Activated CD8-positive, alpha-beta memory T cell treated with anti-CD3 and anti-CD28 coated beads, Interleukin-2, amount 10 ng/mL, durations not matched to agents 7 days and 5 days (primary cell): ENCODE measurements at regions of chr7 and their contacts with region 1.

Region 1: GRCh38 chr7:151631968-151632749 is 112.5 kb upstream of the RHEB start:
- DNase-seq: peak; percentile 89
- ATAC-seq: peak; percentile 84
- H3K4me3 Mint-ChIP-seq: peak overlapping the region; percentile 85
- H3K27ac Mint-ChIP-seq: peak overlapping the region; percentile 95
- H3K4me1 Mint-ChIP-seq: peaks cover 29% of the 10 kb centered on the region
- H3K27me3 Mint-ChIP-seq: no peaks in the 10 kb centered on the region

Region 2: GRCh38 chr7:151621961-151622360 is 10.2 kb before region 1 on chr7:
- CTCF ChIA-PET with region 1: interaction called, 16 read pairs
- DNase-seq: no peak
- ATAC-seq: no peak
- H3K4me3 Mint-ChIP-seq: no peak overlapping the region
- H3K27ac Mint-ChIP-seq: no peak overlapping the region
- H3K4me1 Mint-ChIP-seq: peaks cover 12% of the 10 kb centered on the region
- H3K27me3 Mint-ChIP-seq: no peaks in the 10 kb centered on the region

Region 3: GRCh38 chr7:151642746-151643145 is 10.6 kb after region 1 on chr7:
- CTCF ChIA-PET with region 1: interaction called, 11 read pairs
- DNase-seq: no peak
- ATAC-seq: no peak
- H3K4me3 Mint-ChIP-seq: no peak overlapping the region
- H3K27ac Mint-ChIP-seq: no peak overlapping the region
- H3K4me1 Mint-ChIP-seq: peaks cover 2% of the 10 kb centered on the region
- H3K27me3 Mint-ChIP-seq: no peaks in the 10 kb centered on the region

Region 4: DNA sequence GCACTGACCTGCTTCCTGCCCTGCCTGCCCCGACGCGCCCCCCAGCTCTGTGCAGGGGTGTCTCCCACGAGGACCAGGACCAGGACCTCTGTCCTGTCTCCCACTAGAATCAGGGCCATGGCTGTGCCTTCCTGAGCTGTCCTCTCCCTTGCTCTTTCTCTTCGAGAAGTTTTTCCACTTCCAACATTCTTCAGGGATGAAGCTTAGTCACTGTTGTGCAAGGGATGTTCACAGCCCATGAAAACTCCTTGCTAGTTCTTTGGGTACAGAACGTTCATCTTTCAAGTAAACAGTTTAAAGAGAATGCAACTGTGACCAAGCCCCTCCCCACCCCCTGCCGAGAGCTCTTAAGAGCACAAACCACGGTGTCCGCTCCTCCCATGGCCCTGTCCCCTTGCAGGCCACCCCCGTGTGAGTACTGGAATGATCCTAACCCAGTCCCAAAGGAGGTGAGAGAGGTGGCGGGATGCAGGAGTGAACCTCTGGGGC is 48.6 kb after region 1 on chr7:
- CTCF ChIA-PET with region 1: no interaction called
- DNase-seq: no peak
- ATAC-seq: no peak
- H3K4me3 Mint-ChIP-seq: no peak overlapping the region
- H3K27ac Mint-ChIP-seq: no peak overlapping the region
- H3K4me1 Mint-ChIP-seq: peaks cover 11% of the 10 kb centered on the region
- H3K27me3 Mint-ChIP-seq: no peaks in the 10 kb centered on the region

Region 5: GRCh38 chr7:151759591-151760042 is 127.5 kb after region 1 on chr7:
- CTCF ChIA-PET with region 1: interaction called, 37 read pairs
- DNase-seq: peak; percentile 71
- ATAC-seq: peak; percentile 59
- H3K4me3 Mint-ChIP-seq: no peak overlapping the region
- H3K27ac Mint-ChIP-seq: no peak overlapping the region
- H3K4me1 Mint-ChIP-seq: peaks cover 23% of the 10 kb centered on the region
- H3K27me3 Mint-ChIP-seq: no peaks in the 10 kb centered on the region

Region 6: DNA sequence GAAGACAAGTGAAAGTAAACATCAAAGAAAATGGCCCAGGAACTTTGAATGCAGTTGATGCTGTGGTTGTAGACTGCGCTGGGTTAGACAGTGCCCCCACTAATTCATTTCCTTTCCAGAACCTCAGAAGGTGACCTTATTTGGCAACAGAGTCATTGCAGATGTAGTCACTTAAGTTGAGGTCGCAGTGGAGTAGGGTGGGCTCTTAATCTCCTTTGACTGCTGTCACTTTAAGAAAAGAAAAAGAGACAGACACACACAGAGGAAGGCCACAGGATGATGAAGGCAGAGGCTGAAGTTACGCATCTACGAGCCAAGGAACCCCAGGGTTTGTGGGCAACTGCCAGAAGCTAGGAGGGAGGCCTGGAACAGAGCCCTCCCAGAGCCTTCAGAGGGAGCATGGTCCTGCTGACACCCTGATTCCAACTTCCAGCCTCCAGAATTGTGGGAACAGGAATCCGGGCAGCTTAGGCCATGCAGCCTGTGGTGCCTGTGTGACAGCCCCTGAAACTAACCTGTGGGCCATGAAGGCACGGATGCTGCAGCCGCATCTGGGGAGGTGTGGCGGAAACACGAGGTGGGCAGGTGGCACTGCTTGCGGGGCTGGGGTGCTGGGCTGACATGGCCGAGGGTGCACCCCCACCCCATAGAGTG is 137.2 kb after region 1 on chr7:
- CTCF ChIA-PET with region 1: interaction called, 19 read pairs
- DNase-seq: peak; percentile 74
- ATAC-seq: peak; percentile 94
- H3K4me3 Mint-ChIP-seq: peak overlapping the region; percentile 54
- H3K27ac Mint-ChIP-seq: peak overlapping the region; percentile 92
- H3K4me1 Mint-ChIP-seq: peaks cover 53% of the 10 kb centered on the region
- H3K27me3 Mint-ChIP-seq: no peaks in the 10 kb centered on the region

Region 7: GRCh38 chr7:151897161-151897731 is 265.1 kb after region 1 on chr7:
- CTCF ChIA-PET with region 1: no interaction called
- DNase-seq: no peak
- ATAC-seq: no peak
- H3K4me3 Mint-ChIP-seq: no peak overlapping the region
- H3K27ac Mint-ChIP-seq: no peak overlapping the region
- H3K4me1 Mint-ChIP-seq: no peaks in the 10 kb centered on the region
- H3K27me3 Mint-ChIP-seq: peaks cover 11% of the 10 kb centered on the region